AG04450 (cell line): ENCODE measurements at regions of chr1 and their contacts with region 1.

Region 1: DNA sequence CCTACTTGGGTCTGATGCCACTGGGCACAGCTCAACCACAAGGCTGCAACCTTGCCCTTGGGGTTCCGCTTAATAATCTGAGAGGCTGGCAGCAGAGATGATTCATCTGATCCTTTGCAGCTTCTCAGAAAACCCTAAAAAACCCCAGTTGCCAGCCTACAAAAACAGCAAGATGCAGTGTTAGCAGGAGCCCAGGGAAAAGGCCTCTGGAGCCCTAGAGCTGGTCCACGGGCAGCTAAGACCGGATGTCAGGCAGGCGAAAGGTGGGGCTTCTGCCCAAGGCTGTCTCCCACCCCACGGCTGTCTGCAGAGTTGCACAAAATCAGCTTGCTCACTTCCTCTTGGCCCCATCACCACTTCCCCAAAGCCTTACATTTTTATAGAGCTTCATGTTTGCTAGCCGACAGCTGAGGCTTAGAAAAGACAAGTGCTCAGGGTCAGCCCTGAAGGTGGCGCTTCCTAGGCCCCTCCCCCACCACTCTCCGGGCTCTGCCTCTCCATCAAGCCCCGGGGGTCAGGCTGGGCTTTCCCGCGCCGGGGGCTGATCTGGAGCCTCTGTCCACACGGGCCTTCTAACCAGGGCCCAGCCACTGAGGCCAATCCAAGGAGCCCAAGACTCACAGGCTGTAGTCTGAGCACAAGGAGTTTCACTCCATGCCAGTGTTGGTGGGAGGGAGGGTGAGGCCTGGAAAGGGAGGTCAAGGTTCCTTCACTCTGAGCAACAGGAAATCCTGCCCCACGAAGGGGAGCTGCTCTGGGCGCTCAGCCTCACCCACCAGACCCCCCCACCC is 4.2 kb upstream of the ADORA3 start:
- DNase-seq: peak; percentile 32
- H3K4me3 ChIP-seq: peak overlapping the region; percentile 41
- H3K27ac ChIP-seq: peak overlapping the region; percentile 91
- H3K27me3 ChIP-seq: peaks cover 4% of the 10 kb centered on the region
- CTCF ChIP-seq: peak; percentile 28; the same call in 1 of the 2 replicates

Region 2: DNA sequence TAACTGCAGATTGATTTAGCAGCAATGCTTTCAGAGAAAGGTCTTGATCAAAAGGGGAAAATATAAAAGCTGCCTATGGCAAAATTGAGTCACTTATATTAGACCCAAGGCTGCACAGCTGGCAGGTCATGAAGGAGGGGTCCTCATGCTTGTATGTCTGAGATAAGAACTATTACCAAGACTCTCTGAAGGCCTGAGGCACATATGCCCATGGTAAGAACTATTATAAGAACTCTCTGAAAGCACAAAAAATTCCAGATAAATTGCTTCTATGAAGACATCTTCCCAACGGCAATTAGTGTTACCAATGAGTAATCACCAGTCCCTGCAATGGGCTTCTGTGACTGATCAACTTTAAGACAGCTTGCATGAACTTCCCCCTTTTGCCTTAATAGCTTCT is 501.1 kb before region 1 on chr1:
- CTCF ChIA-PET with region 1: no interaction called
- POLR2A ChIA-PET with region 1: no interaction called
- DNase-seq: no peak
- H3K4me3 ChIP-seq: no peak overlapping the region
- H3K27ac ChIP-seq: no peak overlapping the region
- H3K27me3 ChIP-seq: no peaks in the 10 kb centered on the region
- CTCF ChIP-seq: no peak

Region 3: GRCh38 chr1:111489604-111490003 is 18.0 kb before region 1 on chr1:
- CTCF ChIA-PET with region 1: interaction called, 72 read pairs
- POLR2A ChIA-PET with region 1: interaction called, 3 read pairs
- DNase-seq: no peak
- H3K4me3 ChIP-seq: no peak overlapping the region
- H3K27ac ChIP-seq: no peak overlapping the region
- H3K27me3 ChIP-seq: peaks cover 7% of the 10 kb centered on the region
- CTCF ChIP-seq: no peak

Region 4: DNA sequence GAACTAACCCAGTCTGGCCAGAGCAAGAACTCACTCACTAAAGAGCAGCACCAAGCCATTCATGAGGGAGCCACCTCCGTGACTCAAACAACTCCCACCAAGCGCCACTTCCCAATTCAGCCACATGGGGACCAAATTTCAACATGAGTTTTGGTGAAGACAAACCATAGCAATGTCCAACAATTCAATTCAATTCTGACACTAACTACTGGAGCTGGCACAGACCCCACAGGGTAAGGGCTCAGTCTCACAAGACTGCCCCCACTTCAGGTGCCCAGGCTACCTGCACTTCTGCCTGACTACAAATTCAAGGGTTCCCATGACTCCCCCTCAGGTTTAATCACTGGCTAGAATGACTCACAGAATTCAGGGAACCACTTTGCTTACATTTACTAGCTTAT is 63.2 kb after region 1 on chr1:
- CTCF ChIA-PET with region 1: interaction called, 11 read pairs
- POLR2A ChIA-PET with region 1: no interaction called
- DNase-seq: no peak
- H3K4me3 ChIP-seq: no peak overlapping the region
- H3K27ac ChIP-seq: no peak overlapping the region
- H3K27me3 ChIP-seq: no peaks in the 10 kb centered on the region
- CTCF ChIP-seq: 0 out of 2 replicates have a peak, but pooled peaks have one; percentile 25

Region 5: GRCh38 chr1:111619635-111620440 is 112.2 kb after region 1 on chr1 and contains the start of gene RAP1A:
- CTCF ChIA-PET with region 1: interaction called, 42 read pairs
- POLR2A ChIA-PET with region 1: interaction called, 5 read pairs
- DNase-seq: peak; percentile 68
- H3K4me3 ChIP-seq: peak within 1 kb of the TSS; percentile 95
- H3K27ac ChIP-seq: peak within 1 kb of the TSS; percentile 25
- H3K27me3 ChIP-seq: no peaks in the 10 kb centered on the region
- CTCF ChIP-seq: no peak
- polyA plus RNA-seq, gene RAP1A: 60.0 and 78.1 TPM in 2 replicates

Region 6: DNA sequence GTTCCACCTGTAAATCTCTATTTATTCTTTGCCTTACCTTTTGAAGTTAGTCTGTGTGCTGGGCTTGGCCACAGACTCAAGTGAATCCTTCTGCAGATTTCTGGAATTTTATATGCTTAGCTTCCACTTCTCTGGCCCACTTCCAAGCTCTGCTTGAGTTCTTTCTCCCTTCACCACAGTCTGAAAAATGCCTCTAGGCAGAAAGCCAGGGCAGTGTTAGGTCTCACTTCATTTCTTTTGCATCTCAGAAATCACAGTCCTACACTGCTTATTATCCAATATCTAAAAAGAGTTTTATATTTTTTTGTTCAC is 182.7 kb after region 1 on chr1:
- CTCF ChIA-PET with region 1: interaction called, 19 read pairs
- POLR2A ChIA-PET with region 1: interaction called, 3 read pairs
- DNase-seq: peak; percentile 77
- H3K4me3 ChIP-seq: no peak overlapping the region
- H3K27ac ChIP-seq: no peak overlapping the region
- H3K27me3 ChIP-seq: no peaks in the 10 kb centered on the region
- CTCF ChIP-seq: no peak

Region 7: GRCh38 chr1:111739194-111739924 is 231.8 kb after region 1 on chr1 and contains the start of gene INKA2:
- CTCF ChIA-PET with region 1: interaction called, 12 read pairs
- POLR2A ChIA-PET with region 1: no interaction called
- DNase-seq: no peak
- H3K4me3 ChIP-seq: peak within 1 kb of the TSS; percentile 71
- H3K27ac ChIP-seq: peak within 1 kb of the TSS; percentile 61
- H3K27me3 ChIP-seq: no peaks in the 10 kb centered on the region
- CTCF ChIP-seq: no peak
- polyA plus RNA-seq, gene INKA2: 2.3 and 2.7 TPM in 2 replicates

Region 8: GRCh38 chr1:111769517-111770146 is 262.0 kb after region 1 on chr1:
- CTCF ChIA-PET with region 1: interaction called, 61 read pairs
- POLR2A ChIA-PET with region 1: no interaction called
- DNase-seq: peak; percentile 41
- H3K4me3 ChIP-seq: no peak overlapping the region
- H3K27ac ChIP-seq: no peak overlapping the region
- H3K27me3 ChIP-seq: no peaks in the 10 kb centered on the region
- CTCF ChIP-seq: peak; percentile 80